Left cardiac atrium (tissue), 4 donors: ENCODE measurements at regions of chr6 and their contacts with region 1.

Region 1: DNA sequence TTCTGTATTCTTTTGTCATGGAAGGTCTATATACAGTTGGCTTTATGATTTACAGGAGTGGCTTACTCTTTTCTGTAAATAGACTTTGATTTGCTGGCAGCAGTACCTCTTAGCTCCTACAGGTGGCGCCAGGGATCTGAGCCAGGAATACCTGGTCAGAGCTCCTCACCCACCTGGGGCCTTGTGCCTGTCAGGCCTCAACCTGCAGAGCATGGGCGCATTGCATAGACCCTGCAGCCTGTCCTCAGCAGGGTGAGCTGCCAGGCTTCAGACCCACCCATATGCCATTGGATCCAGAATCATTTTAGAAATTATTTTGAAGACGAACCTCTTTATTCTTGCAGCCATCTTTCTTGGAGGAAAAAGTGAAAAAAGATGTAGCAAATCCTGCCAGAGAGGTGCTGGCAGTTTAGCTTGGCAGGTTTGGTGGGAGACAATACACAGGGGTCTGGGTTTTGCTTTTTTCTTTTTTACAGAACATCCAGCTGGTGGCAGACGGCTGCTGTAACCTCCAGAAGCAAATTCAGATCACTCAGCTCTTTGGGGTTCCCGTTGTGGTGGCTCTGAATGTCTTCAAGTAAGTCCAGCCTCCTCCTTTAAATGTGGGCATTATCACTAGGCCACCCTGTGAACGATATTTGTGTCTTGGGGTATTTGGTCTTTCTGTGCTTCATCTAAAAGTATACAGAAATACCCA is 149.1 kb downstream of the MTHFD1L start:
- DNase-seq: peak; percentile 66
- ATAC-seq: peak; percentile 67 to 76

Region 2: GRCh38 chr6:151240036-151240685 is 225.6 kb after region 1 on chr6:
- intact Hi-C with region 1: loop called in 1 of 2 experiments (anchors 10 kb)
- DNase-seq: peak; percentile 85
- ATAC-seq: peak; percentile 77 to 88

Region 3: DNA sequence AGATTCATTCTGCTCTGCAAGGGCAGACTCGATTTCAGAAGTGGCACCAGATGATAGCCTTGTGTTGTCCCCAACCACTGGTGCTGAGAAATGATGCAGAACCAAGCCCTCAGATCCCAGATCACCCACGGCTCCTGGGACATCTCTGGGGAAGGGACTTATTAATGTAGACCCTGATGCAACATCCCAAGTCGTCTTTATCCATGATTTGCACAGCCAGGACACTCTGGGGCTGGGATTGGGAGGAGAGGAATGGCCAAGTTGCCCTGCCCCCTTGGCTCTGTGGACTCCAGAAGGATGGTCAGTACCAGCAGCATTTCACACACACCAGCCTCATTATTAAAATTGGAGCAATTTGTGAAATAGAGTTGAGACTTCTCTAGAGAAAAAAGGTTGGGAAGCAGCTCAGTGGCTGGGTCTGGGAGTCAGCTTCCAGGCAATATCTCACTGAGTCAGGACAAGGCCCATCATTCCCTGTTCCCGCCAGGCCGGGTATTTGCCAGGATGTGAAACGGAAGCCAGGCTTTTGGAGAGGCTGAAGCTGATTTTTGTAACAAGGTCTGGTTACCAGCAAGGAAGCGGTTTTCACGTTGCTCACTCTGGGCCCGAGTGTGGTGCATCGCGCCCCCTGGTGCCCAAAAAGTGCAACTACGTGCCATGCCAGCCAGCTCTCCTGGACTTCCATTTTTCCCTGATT is 309.4 kb after region 1 on chr6:
- intact Hi-C with region 1: loop called (anchors 1 to 5 kb)
- DNase-seq: peak; percentile 83
- ATAC-seq: peak; percentile 92